Sigmoid colon (tissue), 7 donors: ENCODE measurements at regions of chr7 and their contacts with region 1.

Region 1: GRCh38 chr7:137898839-137899721 is 52.3 kb upstream of the DGKI start:
- DNase-seq: peak; percentile 88
- H3K4me3 ChIP-seq: no peak overlapping the region
- H3K27ac ChIP-seq: peak overlapping the region in 1 of 4 donors; percentile 37
- H3K4me1 ChIP-seq: peaks cover 0 to 32% (median 25%) of the 10 kb centered on the region in 4 donors
- H3K27me3 ChIP-seq: no peaks in the 10 kb centered on the region
- CTCF ChIP-seq: peak; percentile 76 to 93 (median 90)
- EP300 ChIP-seq: no peak
- POLR2A ChIP-seq: no peak

Region 2: GRCh38 chr7:137606061-137606674 is 292.9 kb before region 1 on chr7:
- intact Hi-C with region 1: loop called (anchors 2 kb)
- DNase-seq: no peak
- H3K4me3 ChIP-seq: no peak overlapping the region
- H3K27ac ChIP-seq: no peak overlapping the region
- H3K4me1 ChIP-seq: no peaks in the 10 kb centered on the region
- H3K27me3 ChIP-seq: no peaks in the 10 kb centered on the region
- CTCF ChIP-seq: peak in 3 of 4 experiments; percentile 11 to 63 (median 39)
- EP300 ChIP-seq: no peak
- POLR2A ChIP-seq: no peak

Region 3: DNA sequence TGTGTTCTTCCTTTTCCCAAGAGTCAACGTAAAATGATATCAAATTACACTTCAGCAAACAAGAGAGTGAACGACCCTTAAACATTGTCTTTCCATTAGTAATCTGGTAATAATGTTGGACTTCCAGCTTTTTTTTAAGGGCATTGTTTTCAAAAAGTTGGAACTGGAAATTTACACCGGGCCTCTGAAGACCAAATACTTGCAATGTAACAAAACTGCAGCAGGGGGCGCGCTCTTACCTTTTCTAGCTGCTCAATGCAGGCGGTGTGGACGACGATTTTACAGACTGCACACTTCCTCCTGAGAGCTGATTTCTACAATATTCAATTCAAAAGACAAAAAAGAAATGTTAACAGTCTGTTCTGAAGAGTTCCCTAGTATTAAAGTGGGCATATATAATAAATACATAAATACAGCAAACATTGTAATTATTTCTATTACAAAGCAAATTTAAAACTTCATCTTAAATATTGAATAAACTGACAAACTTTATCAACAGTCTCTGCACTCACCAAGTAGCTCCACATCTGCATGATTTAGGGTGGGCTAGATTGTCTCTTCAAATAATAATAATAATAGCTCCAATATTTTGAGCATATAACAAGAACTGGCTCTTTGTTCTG is 242.7 kb before region 1 on chr7:
- intact Hi-C with region 1: loop called (anchors 1 kb)
- DNase-seq: peak; percentile 89
- H3K4me3 ChIP-seq: no peak overlapping the region
- H3K27ac ChIP-seq: no peak overlapping the region
- H3K4me1 ChIP-seq: no peaks in the 10 kb centered on the region
- H3K27me3 ChIP-seq: no peaks in the 10 kb centered on the region
- CTCF ChIP-seq: peak; percentile 51 to 79 (median 73)
- EP300 ChIP-seq: no peak
- POLR2A ChIP-seq: no peak

Region 4: GRCh38 chr7:138008547-138009349 is 109.7 kb after region 1 on chr7:
- intact Hi-C with region 1: loop called (anchors 1 kb)
- DNase-seq: no peak
- H3K4me3 ChIP-seq: no peak overlapping the region
- H3K27ac ChIP-seq: no peak overlapping the region
- H3K4me1 ChIP-seq: peaks cover 0 to 8% (median 2%) of the 10 kb centered on the region in 4 donors
- H3K27me3 ChIP-seq: no peaks in the 10 kb centered on the region
- CTCF ChIP-seq: peak; percentile 78 to 90 (median 88)
- EP300 ChIP-seq: no peak
- POLR2A ChIP-seq: no peak